Right ventricle myocardium inferior (tissue), 1 donor: ENCODE measurements at regions of chrX and their contacts with region 1.

Region 1: GRCh38 chrX:129606918-129607317 is 47.8 kb downstream of the APLN start:
- DNase-seq: no peak
- ATAC-seq: peak; percentile 51

Region 2: GRCh38 chrX:129726307-129727111 is 119.6 kb after region 1 on chrX:
- intact Hi-C with region 1: loop called (anchors 2 kb)
- DNase-seq: no peak
- ATAC-seq: peak; percentile 83

Region 3: GRCh38 chrX:129843459-129844306 is 236.8 kb after region 1 on chrX and contains the start of gene ZDHHC9:
- intact Hi-C with region 1: loop called (anchors 5 kb)
- DNase-seq: peak; percentile 93
- ATAC-seq: peak; percentile 98
- total RNA-seq, gene ZDHHC9: 17.9 TPM

Region 4: DNA sequence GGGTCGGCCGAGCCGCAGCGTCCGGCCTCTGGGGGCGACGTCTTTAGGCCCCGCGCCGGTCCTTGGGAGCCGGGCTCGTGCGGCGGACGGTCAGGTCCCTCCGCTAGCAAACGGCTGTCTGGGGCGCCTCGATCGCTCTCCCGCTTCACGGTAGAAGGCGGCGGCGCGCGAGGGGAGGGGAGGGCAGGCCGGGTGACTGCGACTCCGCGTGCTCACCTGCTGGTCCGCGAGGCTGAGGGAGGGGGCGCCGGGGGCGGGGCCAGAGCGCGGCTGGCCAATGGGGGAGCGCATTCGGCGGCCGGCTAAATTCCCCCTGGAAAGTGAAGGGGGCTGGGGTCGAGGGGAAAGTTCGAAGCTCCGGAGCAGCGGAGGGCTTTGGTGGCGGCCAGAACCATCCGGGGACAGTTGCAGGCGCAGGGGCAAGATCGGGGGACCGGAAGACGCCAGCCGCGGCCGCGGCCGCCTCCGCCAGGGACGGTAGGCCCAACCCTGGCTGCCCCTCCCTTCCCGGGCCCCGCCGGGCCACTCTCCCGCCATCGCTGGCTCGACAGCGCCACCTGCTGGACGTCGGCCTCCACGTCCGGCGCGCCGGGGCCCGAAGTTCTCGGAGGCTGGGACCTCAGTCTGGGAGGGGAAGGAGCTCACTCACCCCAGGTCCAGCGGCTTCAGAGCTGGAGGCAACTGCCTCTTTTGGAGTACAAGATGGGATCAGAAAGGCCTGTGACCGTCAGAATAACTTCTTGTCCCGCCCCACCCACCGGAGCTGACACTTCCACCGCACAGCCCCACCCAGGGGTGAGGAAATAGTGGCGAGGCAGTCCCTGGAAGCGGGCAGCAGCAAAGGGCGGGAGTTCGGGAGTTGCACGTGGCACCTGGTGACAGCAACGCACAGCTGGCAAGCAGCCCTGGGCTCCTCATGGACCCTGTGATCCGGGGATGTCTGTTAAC is 453.5 kb after region 1 on chrX:
- intact Hi-C with region 1: loop called (anchors 2 kb)
- DNase-seq: peak; percentile 89
- ATAC-seq: peak; percentile 93

Region 5: GRCh38 chrX:130196466-130196865 is 589.5 kb after region 1 on chrX:
- intact Hi-C with region 1: loop called (anchors 10 kb)
- DNase-seq: no peak
- ATAC-seq: no peak